ENCODE measurements at regions of chr13 and their contacts with region 1.

Region 1: GRCh38 chr13:100721885-100722512 is 47.4 kb upstream of the TMTC4 start:
- DNase-seq: peak; percentile 12
- H3K4me3 ChIP-seq: no peak overlapping the region
- H3K27ac ChIP-seq: no peak overlapping the region
- H3K4me1 ChIP-seq: no peaks in the 10 kb centered on the region
- H3K27me3 ChIP-seq: no peaks in the 10 kb centered on the region
- CTCF ChIP-seq: peak; percentile 72 to 79

Region 2: GRCh38 chr13:100573121-100573520 is 148.9 kb before region 1 on chr13:
- CTCF ChIA-PET with region 1: no interaction called
- dilution Hi-C with region 1: no loop called
- in situ Hi-C with region 1: no loop called
- intact Hi-C with region 1: loop called (anchors 10 kb)
- DNase-seq: peak; percentile 51
- H3K4me3 ChIP-seq: no peak overlapping the region
- H3K27ac ChIP-seq: no peak overlapping the region
- H3K4me1 ChIP-seq: no peaks in the 10 kb centered on the region
- H3K27me3 ChIP-seq: peaks cover 2% of the 10 kb centered on the region
- CTCF ChIP-seq: peak; percentile 76 to 85

Region 3: GRCh38 chr13:100633461-100633860 is 88.5 kb before region 1 on chr13:
- CTCF ChIA-PET with region 1: no interaction called
- dilution Hi-C with region 1: no loop called
- in situ Hi-C with region 1: no loop called
- intact Hi-C with region 1: no loop called
- DNase-seq: peak; percentile 74
- H3K4me3 ChIP-seq: no peak overlapping the region
- H3K27ac ChIP-seq: no peak overlapping the region
- H3K4me1 ChIP-seq: no peaks in the 10 kb centered on the region
- H3K27me3 ChIP-seq: no peaks in the 10 kb centered on the region
- CTCF ChIP-seq: no peak

Region 4: DNA sequence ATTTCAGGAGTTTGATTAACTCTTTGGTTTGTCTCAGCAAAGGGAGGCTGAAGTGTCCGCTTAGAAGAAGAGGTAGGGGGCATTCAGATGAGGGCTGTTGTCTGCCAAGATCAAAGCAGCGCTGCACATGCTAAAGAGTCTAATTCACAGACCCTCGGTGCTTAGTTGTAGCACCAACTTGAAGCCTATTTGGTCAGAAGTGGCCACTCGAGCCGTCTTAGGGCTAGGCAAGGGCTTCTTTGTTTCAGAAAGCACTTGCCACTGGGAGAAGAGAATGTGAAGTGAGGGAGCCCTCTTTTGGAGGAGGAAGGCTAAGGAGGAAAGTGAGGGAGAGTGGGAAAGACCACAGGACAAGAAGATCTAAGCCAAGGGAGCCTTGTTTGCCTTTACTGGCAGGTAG is 266.0 kb after region 1 on chr13:
- CTCF ChIA-PET with region 1: no interaction called
- dilution Hi-C with region 1: no loop called
- in situ Hi-C with region 1: no loop called
- intact Hi-C with region 1: loop called (anchors 5 kb)
- DNase-seq: no peak
- H3K4me3 ChIP-seq: no peak overlapping the region
- H3K27ac ChIP-seq: no peak overlapping the region
- H3K4me1 ChIP-seq: no peaks in the 10 kb centered on the region
- H3K27me3 ChIP-seq: no peaks in the 10 kb centered on the region
- CTCF ChIP-seq: peak in 1 of 2 donors; percentile 37

Region 5: GRCh38 chr13:101098873-101099272 is 376.9 kb after region 1 on chr13:
- CTCF ChIA-PET with region 1: no interaction called
- dilution Hi-C with region 1: no loop called
- in situ Hi-C with region 1: no loop called
- intact Hi-C with region 1: loop called (anchors 1 kb)
- DNase-seq: no peak
- H3K4me3 ChIP-seq: no peak overlapping the region
- H3K27ac ChIP-seq: no peak overlapping the region
- H3K4me1 ChIP-seq: no peaks in the 10 kb centered on the region
- H3K27me3 ChIP-seq: no peaks in the 10 kb centered on the region
- CTCF ChIP-seq: no peak